Colonic mucosa (tissue), 4 donors: ENCODE measurements at regions of chr12 and their contacts with region 1.

Region 1: GRCh38 chr12:3622021-3622821 is 130.7 kb downstream of the CRACR2A start:
- DNase-seq: no peak
- H3K4me3 ChIP-seq: no peak overlapping the region
- H3K27ac ChIP-seq: no peak overlapping the region
- H3K4me1 ChIP-seq: no peaks in the 10 kb centered on the region
- H3K27me3 ChIP-seq: no peaks in the 10 kb centered on the region
- CTCF ChIP-seq: no peak

Region 2: GRCh38 chr12:3190101-3190500 is 432.1 kb before region 1 on chr12:
- intact Hi-C with region 1: no loop called
- DNase-seq: no peak
- H3K4me3 ChIP-seq: no peak overlapping the region
- H3K27ac ChIP-seq: no peak overlapping the region
- H3K4me1 ChIP-seq: no peaks in the 10 kb centered on the region
- H3K27me3 ChIP-seq: no peaks in the 10 kb centered on the region
- CTCF ChIP-seq: no peak

Region 3: DNA sequence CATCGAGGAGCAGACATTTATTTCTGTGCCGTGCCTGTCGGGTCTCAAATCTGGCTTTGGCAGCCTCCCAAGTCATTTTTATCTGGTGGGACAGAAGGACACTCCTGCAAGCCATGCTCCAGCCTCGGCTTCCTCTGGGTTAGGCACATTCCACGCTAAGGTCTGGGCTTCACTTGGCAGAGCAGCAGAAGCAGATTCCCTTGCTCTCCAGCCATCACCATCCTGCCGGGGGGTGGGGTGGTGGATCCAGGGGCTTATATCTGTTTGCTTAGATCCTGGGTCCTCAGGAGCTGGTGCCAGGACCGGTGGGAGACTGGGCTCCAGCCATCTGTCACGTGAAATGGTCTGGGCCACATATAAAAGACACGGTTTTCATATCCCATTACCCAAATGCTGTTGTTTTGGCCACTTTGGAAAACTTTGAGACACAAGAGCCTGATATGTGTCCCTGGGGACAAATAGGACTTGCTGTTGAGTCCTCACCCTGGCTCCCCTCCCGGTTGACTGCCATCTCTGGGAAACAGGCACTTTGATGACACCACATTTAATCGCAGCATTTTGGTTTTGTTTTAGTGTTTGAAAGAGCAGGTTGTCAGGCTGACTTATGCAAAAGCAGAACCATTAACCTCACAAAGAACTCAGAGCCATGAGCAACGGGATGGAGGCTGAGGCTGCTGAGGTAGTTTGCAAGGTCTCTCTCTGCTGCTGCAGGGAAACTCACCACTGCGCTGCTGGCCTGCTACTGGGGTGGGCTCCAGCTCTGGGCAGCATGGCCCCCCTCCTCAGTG is 200.8 kb before region 1 on chr12:
- intact Hi-C with region 1: loop called (anchors 5 kb)
- DNase-seq: no peak
- H3K4me3 ChIP-seq: no peak overlapping the region
- H3K27ac ChIP-seq: no peak overlapping the region
- H3K4me1 ChIP-seq: no peaks in the 10 kb centered on the region
- H3K27me3 ChIP-seq: no peaks in the 10 kb centered on the region
- CTCF ChIP-seq: no peak

Region 4: GRCh38 chr12:3727877-3728632 is 105.8 kb after region 1 on chr12:
- intact Hi-C with region 1: no loop called
- DNase-seq: no peak
- H3K4me3 ChIP-seq: no peak overlapping the region
- H3K27ac ChIP-seq: no peak overlapping the region
- H3K4me1 ChIP-seq: peaks cover 9% of the 10 kb centered on the region
- H3K27me3 ChIP-seq: no peaks in the 10 kb centered on the region
- CTCF ChIP-seq: no peak